Gastrocnemius medialis (tissue), 4 donors: ENCODE measurements at regions of chr11 and their contacts with region 1.

Region 1: GRCh38 chr11:130427581-130428315 is 661 bp downstream of the ADAMTS8 start:
- DNase-seq: no peak
- ATAC-seq: no peak
- H3K4me3 ChIP-seq: peak overlapping the region; percentile 26 to 53 (median 36)
- H3K27ac ChIP-seq: no peak overlapping the region
- H3K4me1 ChIP-seq: peaks cover 2 to 8% of the 10 kb centered on the region in 2 donors
- H3K27me3 ChIP-seq: peaks cover 15 to 24% (median 17%) of the 10 kb centered on the region in 3 donors
- CTCF ChIP-seq: peak in 1 of 5 experiments; percentile 16
- POLR2A ChIP-seq: no peak

Region 2: DNA sequence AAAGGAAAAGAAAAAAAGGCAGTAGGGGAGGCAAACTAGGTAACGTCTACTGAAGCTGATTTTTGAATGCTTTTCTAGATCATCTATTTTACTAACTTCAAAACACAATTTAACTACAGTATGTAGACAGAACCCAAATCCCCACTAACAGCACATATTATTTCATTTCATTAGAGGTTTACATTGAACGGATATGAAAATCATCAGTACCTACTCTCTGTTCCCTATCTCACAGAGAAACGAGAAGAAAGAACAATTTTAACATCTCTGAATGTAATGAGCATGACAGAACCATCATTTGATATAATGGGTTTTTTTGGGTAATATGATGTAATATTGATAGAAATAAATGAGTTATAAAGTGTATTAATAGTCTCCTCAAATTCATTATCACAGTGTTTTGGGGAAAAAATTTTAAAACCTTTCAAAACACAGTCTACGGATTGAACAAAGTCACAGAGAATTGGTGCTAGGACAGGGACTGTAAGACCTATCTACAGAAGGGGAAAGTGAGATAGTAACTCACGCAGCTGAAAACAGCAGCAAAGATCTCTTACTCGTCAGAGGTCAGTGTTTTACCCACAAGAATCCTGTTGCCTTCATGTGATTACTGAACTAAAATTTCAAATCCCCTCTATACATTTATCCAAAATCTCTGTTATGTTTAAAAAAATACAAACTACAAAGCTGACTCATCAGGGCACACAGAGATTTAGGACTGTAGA is 190.3 kb before region 1 on chr11:
- in situ Hi-C with region 1: no loop called
- intact Hi-C with region 1: no loop called
- DNase-seq: no peak
- ATAC-seq: no peak
- H3K4me3 ChIP-seq: no peak overlapping the region
- H3K27ac ChIP-seq: no peak overlapping the region
- H3K4me1 ChIP-seq: no peaks in the 10 kb centered on the region
- H3K27me3 ChIP-seq: no peaks in the 10 kb centered on the region
- CTCF ChIP-seq: no peak
- POLR2A ChIP-seq: no peak

Region 3: GRCh38 chr11:130894322-130895025 is 466.7 kb after region 1 on chr11:
- in situ Hi-C with region 1: loop called in 3 of 4 experiments (anchors 10 kb)
- intact Hi-C with region 1: loop called (anchors 1 kb)
- DNase-seq: peak; percentile 34 to 62
- ATAC-seq: peak; percentile 62 to 68
- H3K4me3 ChIP-seq: no peak overlapping the region
- H3K27ac ChIP-seq: no peak overlapping the region
- H3K4me1 ChIP-seq: peaks cover 31 to 36% of the 10 kb centered on the region in 2 donors
- H3K27me3 ChIP-seq: no peaks in the 10 kb centered on the region
- CTCF ChIP-seq: peak; percentile 74 to 89 (median 83)
- POLR2A ChIP-seq: no peak